Heart left ventricle (tissue), 16 donors: ENCODE measurements at regions of chr5 and their contacts with region 1.

Region 1: GRCh38 chr5:39224196-39224761 is 4.9 kb upstream of the FYB1 start:
- DNase-seq: peak in 3 of 5 donors; percentile 24 to 43 (median 37)
- ATAC-seq: peak in 3 of 4 donors; percentile 30 to 64 (median 55)
- H3K4me3 ChIP-seq: no peak overlapping the region
- H3K27ac ChIP-seq: peak overlapping the region in 1 of 12 donors; percentile 84
- H3K4me1 ChIP-seq: peaks cover 0 to 52% (median 0%) of the 10 kb centered on the region in 12 donors
- H3K27me3 ChIP-seq: peaks cover 0 to 3% (median 0%) of the 10 kb centered on the region in 9 donors
- CTCF ChIP-seq: no peak
- POLR2A ChIP-seq: no peak

Region 2: GRCh38 chr5:39283231-39283818 is 59.0 kb after region 1 on chr5:
- intact Hi-C with region 1: loop called in 5 of 10 experiments (anchors 2 to 5 kb)
- DNase-seq: peak in 2 of 5 donors; percentile 26 to 29
- ATAC-seq: peak; percentile 47 to 90 (median 82)
- H3K4me3 ChIP-seq: no peak overlapping the region
- H3K27ac ChIP-seq: no peak overlapping the region
- H3K4me1 ChIP-seq: peaks cover 0 to 6% (median 0%) of the 10 kb centered on the region in 12 donors
- H3K27me3 ChIP-seq: no peaks in the 10 kb centered on the region
- CTCF ChIP-seq: peak; percentile 38 to 70 (median 58)
- POLR2A ChIP-seq: no peak